Posterior cingulate gyrus (tissue), 11 donors: ENCODE measurements at regions of chr5 and their contacts with region 1.

Region 1: GRCh38 chr5:115586601-115587048 is 15.7 kb downstream of the TICAM2 start:
- DNase-seq: no peak

Region 2: GRCh38 chr5:115309751-115310370 is 276.8 kb before region 1 on chr5:
- intact Hi-C with region 1: loop called (anchors 1 kb)
- DNase-seq: no peak

Region 3: DNA sequence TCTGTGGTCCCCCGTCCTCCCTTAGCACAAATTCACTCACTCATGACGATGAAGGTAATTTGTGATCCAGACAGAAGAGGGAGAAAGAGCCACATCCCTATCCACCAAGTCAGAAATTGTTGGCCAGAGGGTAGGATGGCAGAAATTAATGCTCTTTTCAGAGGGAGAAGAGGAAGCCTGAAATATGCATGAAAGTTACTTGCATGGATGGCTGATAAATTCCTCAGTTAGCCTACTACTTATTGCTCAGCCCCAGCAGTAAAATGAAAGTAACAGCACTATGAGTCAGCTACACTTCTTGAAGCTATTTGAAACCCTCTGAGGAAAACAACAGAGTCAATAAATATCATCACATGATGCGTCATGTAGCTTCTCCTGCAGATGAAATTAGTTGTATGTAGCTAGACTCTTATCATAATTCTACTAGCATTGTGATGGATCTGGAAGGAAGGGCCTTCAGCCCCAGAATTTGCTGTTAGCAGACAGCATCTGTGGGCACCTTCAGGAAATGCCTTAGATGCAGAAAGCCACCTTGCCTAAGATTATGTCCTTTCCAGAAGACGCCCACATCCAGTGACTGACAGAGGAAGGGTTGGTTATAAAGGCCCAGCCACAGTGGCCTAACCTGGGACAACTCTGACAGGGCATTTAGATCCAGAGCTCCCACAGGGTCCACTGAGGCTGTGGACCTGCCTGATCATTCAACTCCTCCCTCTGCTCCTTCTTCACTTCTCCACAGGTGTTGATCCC is 209.0 kb before region 1 on chr5:
- intact Hi-C with region 1: loop called (anchors 10 kb)
- DNase-seq: no peak